Natural killer cell (primary cell): ENCODE measurements at regions of chr18 and their contacts with region 1.

Region 1: DNA sequence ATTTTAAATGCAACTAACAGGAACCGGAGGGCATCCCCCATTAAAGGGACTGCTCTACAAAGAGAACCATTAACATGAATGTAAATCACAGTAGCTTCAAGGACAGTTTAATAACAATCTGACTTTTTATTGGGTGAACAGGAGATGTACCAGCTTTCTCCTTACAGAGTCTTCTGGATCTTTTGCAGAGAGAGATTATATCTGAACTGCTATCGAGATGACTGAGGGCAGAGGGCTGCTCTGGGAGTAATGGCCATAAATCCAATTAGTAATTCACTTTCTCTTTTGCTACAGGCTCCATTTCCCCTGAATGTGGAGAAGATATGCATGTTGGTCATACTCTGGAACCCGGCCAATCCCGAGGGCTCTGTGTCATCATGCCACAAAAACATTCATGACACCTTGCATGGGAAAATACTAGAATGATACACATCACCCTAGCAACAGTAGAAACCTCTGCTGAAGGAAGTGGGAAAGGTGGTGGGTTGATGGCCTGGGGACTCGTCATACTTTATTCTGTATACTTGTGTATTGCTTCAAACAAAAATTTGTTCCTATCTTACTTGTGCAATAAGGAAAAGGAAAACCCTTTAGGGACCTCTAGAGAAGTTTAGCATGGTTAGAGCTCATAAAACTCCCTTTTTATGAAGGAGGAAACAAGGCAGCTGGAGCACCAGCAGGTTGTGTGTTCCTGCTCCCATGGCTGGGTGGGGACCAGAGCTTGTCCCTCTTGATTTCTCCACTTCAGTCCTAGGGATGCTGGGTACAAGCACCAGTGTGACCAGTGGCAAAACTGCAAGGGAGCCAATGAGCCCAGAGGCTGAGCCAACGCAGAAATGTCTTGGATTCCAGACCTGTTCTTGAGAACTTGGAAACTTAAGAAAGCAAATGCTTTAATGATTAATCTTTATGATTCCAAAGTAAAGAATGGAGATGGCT is 26.0 kb downstream of the CTAGE1 start:
- DNase-seq: peak; percentile 77 to 84
- ATAC-seq: peak; percentile 66 to 83 (median 76)
- H3K4me3 ChIP-seq: no peak overlapping the region
- H3K4me3 Mint-ChIP-seq: peak overlapping the region; percentile 77
- H3K27ac ChIP-seq: peak overlapping the region; percentile 76
- H3K27ac Mint-ChIP-seq: peak overlapping the region; percentile 94 to 95
- H3K4me1 ChIP-seq: peaks cover 29% of the 10 kb centered on the region
- H3K4me1 Mint-ChIP-seq: peaks cover 78% of the 10 kb centered on the region in 2 donors
- H3K27me3 ChIP-seq: no peaks in the 10 kb centered on the region
- H3K27me3 Mint-ChIP-seq: no peaks in the 10 kb centered on the region
- CTCF ChIP-seq: no peak

Region 2: DNA sequence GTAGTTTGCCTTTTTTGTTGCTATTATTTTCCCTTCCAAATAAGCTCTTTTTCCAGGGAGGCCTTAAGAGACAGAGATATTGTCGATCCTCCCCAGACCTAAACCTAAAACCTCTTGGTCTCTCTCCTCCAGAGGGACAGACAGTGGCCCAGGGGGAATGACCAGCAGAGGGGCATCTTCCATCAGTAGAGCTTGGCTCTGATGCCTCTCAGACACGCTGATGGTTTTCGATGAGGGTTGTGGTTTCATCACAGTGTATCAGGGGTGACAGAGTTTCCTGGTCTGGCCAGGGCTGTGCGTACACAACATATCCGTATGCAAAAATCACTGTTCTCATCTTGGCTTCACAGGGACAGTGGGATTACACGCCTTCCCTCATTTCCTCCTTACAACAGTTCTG is 153.6 kb before region 1 on chr18:
- intact Hi-C with region 1: no loop called
- DNase-seq: peak; percentile 57 to 74
- ATAC-seq: peak; percentile 94 to 100 (median 97)
- H3K4me3 ChIP-seq: no peak overlapping the region
- H3K4me3 Mint-ChIP-seq: peak overlapping the region; percentile 11
- H3K27ac ChIP-seq: no peak overlapping the region
- H3K27ac Mint-ChIP-seq: peak overlapping the region; percentile 61 to 75
- H3K4me1 ChIP-seq: peaks cover 15% of the 10 kb centered on the region
- H3K4me1 Mint-ChIP-seq: peaks cover 16 to 20% of the 10 kb centered on the region in 2 donors
- H3K27me3 ChIP-seq: no peaks in the 10 kb centered on the region
- H3K27me3 Mint-ChIP-seq: peaks cover 18 to 30% of the 10 kb centered on the region in 2 donors
- CTCF ChIP-seq: peak; percentile 63

Region 3: GRCh38 chr18:22257022-22257543 is 134.6 kb before region 1 on chr18:
- intact Hi-C with region 1: loop called (anchors 1 kb)
- DNase-seq: no peak
- ATAC-seq: no peak
- H3K4me3 ChIP-seq: no peak overlapping the region
- H3K4me3 Mint-ChIP-seq: no peak overlapping the region
- H3K27ac ChIP-seq: no peak overlapping the region
- H3K27ac Mint-ChIP-seq: peak overlapping the region in 1 of 2 donors; percentile 48
- H3K4me1 ChIP-seq: peaks cover 33% of the 10 kb centered on the region
- H3K4me1 Mint-ChIP-seq: peaks cover 45 to 57% of the 10 kb centered on the region in 2 donors
- H3K27me3 ChIP-seq: no peaks in the 10 kb centered on the region
- H3K27me3 Mint-ChIP-seq: peaks cover 28 to 34% of the 10 kb centered on the region in 2 donors
- CTCF ChIP-seq: no peak

Region 4: GRCh38 chr18:22282311-22283112 is 109.2 kb before region 1 on chr18:
- intact Hi-C with region 1: loop called (anchors 1 kb)
- DNase-seq: peak; percentile 72 to 80
- ATAC-seq: peak; percentile 83 to 92 (median 92)
- H3K4me3 ChIP-seq: no peak overlapping the region
- H3K4me3 Mint-ChIP-seq: peak overlapping the region; percentile 62
- H3K27ac ChIP-seq: peak overlapping the region; percentile 89
- H3K27ac Mint-ChIP-seq: peak overlapping the region; percentile 94 to 96
- H3K4me1 ChIP-seq: peaks cover 11% of the 10 kb centered on the region
- H3K4me1 Mint-ChIP-seq: peaks cover 27 to 40% of the 10 kb centered on the region in 2 donors
- H3K27me3 ChIP-seq: no peaks in the 10 kb centered on the region
- H3K27me3 Mint-ChIP-seq: peaks cover 3 to 7% of the 10 kb centered on the region in 2 donors
- CTCF ChIP-seq: no peak

Region 5: GRCh38 chr18:22332590-22332989 is 59.1 kb before region 1 on chr18:
- intact Hi-C with region 1: no loop called
- DNase-seq: peak in 1 of 2 donors; percentile 26
- ATAC-seq: peak; percentile 48 to 78 (median 69)
- H3K4me3 ChIP-seq: no peak overlapping the region
- H3K4me3 Mint-ChIP-seq: no peak overlapping the region
- H3K27ac ChIP-seq: no peak overlapping the region
- H3K27ac Mint-ChIP-seq: no peak overlapping the region
- H3K4me1 ChIP-seq: peaks cover 13% of the 10 kb centered on the region
- H3K4me1 Mint-ChIP-seq: peaks cover 25 to 37% of the 10 kb centered on the region in 2 donors
- H3K27me3 ChIP-seq: no peaks in the 10 kb centered on the region
- H3K27me3 Mint-ChIP-seq: no peaks in the 10 kb centered on the region
- CTCF ChIP-seq: no peak

Region 6: DNA sequence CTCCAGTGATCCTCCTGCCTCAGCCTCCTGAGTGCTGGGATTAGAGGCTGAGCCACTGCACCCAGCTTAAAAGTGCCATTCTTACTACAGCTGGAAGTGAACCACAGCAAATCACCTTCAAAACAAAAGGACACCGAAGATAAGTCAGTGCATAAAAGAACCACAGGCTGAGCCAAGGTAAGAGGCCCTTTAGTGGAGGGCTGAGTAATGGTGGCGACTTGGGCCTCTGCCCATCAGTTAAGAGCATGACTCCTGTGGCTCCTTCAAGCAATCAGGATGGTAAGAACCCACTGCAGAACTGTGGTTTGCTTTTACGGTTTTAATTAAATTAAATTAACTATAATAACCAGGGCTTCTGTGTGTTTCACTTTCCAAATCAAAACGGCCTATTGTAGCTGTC is 49.1 kb before region 1 on chr18:
- intact Hi-C with region 1: loop called (anchors 1 kb)
- DNase-seq: peak; percentile 38 to 74
- ATAC-seq: peak; percentile 15 to 28 (median 23)
- H3K4me3 ChIP-seq: no peak overlapping the region
- H3K4me3 Mint-ChIP-seq: peak overlapping the region; percentile 61
- H3K27ac ChIP-seq: peak overlapping the region; percentile 94
- H3K27ac Mint-ChIP-seq: peak overlapping the region; percentile 92 to 97
- H3K4me1 ChIP-seq: peaks cover 87% of the 10 kb centered on the region
- H3K4me1 Mint-ChIP-seq: peaks cover 77 to 89% of the 10 kb centered on the region in 2 donors
- H3K27me3 ChIP-seq: no peaks in the 10 kb centered on the region
- H3K27me3 Mint-ChIP-seq: no peaks in the 10 kb centered on the region
- CTCF ChIP-seq: no peak

Region 7: DNA sequence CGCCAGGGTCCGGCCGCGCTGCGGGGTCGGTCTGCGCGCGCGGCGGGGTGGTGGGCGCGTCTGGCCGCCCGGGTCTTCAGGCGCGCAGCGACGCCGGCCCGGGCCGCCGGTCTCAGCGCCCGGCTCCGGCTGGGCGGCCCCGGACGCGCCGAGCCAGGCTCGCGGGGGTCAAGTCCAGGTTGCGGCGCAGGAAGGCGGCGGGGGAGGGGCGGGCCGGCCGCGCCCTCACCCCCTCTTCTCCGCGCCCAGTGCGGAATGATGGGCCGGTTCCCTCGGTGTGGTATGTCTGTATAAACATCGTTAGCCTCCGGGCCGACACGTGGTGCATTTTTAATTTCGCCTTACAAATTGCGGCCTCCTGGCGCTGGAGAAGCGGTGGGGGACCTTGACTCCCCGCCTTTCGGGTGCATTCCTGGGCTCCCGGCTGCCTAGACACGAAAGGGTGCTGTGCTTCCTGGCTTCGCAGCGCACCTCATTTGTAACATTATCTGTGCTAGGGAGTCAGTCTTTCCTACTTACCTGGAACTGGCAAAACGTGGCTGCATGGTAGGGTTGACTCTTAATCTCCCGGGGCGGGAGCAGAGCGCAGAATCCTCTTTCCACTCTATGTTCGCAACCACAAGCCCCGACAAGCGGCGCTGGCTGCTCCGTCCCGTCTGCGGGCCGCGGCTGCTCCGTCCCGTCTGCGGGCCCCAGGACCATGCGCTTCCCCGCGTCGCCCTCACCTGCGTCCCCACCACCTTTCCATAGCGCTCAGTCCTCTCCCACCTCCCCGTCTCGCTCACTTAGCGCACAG is 43.0 kb before region 1 on chr18:
- intact Hi-C with region 1: loop called (anchors 1 kb)
- DNase-seq: peak; percentile 34 to 43
- ATAC-seq: peak in 1 of 3 donors; percentile 3
- H3K4me3 ChIP-seq: peak overlapping the region; percentile 79
- H3K4me3 Mint-ChIP-seq: peak overlapping the region; percentile 92
- H3K27ac ChIP-seq: peak overlapping the region; percentile 94
- H3K27ac Mint-ChIP-seq: peak overlapping the region; percentile 92 to 97
- H3K4me1 ChIP-seq: peaks cover 44% of the 10 kb centered on the region
- H3K4me1 Mint-ChIP-seq: peaks cover 65% of the 10 kb centered on the region in 2 donors
- H3K27me3 ChIP-seq: no peaks in the 10 kb centered on the region
- H3K27me3 Mint-ChIP-seq: no peaks in the 10 kb centered on the region
- CTCF ChIP-seq: no peak

Region 8: DNA sequence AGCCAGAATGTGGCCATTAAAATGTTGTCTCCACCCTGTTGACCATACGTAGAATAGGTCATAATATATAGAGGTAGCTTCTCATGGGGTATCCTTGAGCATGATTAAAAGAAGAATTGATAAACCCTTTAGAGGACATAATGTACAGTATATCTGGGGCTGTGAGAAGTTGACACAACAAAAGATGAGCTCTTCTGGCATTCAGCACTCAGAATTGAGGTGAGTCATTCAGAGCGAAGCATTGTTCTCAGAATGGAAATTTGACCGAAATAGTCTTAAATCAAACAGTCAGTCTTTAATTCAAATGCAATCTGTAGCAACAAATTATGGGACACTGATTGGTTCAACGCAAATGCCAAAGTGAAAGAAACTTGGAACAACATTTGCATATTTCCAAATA is 21.3 kb before region 1 on chr18:
- intact Hi-C with region 1: no loop called
- DNase-seq: no peak
- ATAC-seq: no peak
- H3K4me3 ChIP-seq: no peak overlapping the region
- H3K4me3 Mint-ChIP-seq: no peak overlapping the region
- H3K27ac ChIP-seq: no peak overlapping the region
- H3K27ac Mint-ChIP-seq: no peak overlapping the region
- H3K4me1 ChIP-seq: no peaks in the 10 kb centered on the region
- H3K4me1 Mint-ChIP-seq: peaks cover 4 to 6% of the 10 kb centered on the region in 2 donors
- H3K27me3 ChIP-seq: no peaks in the 10 kb centered on the region
- H3K27me3 Mint-ChIP-seq: peaks cover 16 to 22% of the 10 kb centered on the region in 2 donors
- CTCF ChIP-seq: no peak

Region 9: DNA sequence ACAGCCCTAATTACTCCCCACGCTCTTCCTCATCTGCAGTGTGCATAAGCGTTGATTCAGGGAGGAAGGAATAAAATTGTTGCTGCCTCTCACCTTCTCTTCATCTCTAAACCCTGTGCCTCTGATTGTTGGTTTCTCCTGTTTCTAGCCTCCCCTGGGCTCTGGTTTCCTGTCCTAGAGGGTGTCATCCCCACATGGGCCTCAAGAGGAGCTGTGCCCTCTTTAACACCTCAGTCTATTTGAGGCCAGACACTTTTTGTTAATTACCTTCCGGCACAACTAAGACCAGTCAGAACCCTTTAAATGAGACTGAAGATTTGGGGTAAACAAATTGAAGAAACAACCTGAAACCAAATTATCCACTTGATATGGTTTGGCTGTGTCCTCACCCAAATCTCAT is 16.4 kb after region 1 on chr18:
- intact Hi-C with region 1: loop called (anchors 2 kb)
- DNase-seq: peak; percentile 33 to 48
- ATAC-seq: peak; percentile 89 to 96 (median 93)
- H3K4me3 ChIP-seq: no peak overlapping the region
- H3K4me3 Mint-ChIP-seq: peak overlapping the region; percentile 84
- H3K27ac ChIP-seq: peak overlapping the region; percentile 72
- H3K27ac Mint-ChIP-seq: peak overlapping the region; percentile 88 to 92
- H3K4me1 ChIP-seq: peaks cover 32% of the 10 kb centered on the region
- H3K4me1 Mint-ChIP-seq: peaks cover 49 to 52% of the 10 kb centered on the region in 2 donors
- H3K27me3 ChIP-seq: no peaks in the 10 kb centered on the region
- H3K27me3 Mint-ChIP-seq: peaks cover 0 to 2% of the 10 kb centered on the region in 2 donors
- CTCF ChIP-seq: peak; percentile 57

Region 10: DNA sequence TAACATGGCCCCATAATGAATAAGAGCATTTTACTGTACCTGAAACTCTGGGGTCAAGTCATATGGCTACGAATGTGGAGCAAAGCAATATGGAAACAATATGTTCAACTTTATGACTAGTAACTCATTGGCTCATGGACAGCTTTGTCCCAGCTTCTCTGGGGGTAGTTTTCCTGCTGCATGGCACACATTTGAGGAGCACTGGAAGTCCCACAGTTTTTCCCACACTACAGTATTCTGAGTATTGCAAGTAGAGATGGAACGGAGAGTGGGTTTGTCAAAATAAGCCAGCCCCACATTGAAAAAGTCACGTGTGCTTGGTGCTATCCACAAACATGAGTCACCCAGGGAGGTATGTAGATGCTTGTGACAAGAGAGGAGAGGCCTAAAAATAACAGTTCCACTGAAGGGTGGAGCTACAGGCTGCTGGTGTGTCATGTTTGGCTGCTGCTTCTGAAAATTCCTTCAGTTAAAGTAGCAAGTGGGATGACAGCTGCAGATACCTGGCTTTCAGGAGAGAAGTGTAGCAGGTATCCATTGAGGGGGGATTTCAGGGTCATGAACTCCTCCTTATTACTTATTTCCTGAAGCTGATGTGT is 74.3 kb after region 1 on chr18:
- intact Hi-C with region 1: loop called (anchors 2 kb)
- DNase-seq: peak; percentile 50 to 71
- ATAC-seq: peak; percentile 96 to 100 (median 97)
- H3K4me3 ChIP-seq: no peak overlapping the region
- H3K4me3 Mint-ChIP-seq: peak overlapping the region; percentile 86
- H3K27ac ChIP-seq: no peak overlapping the region
- H3K27ac Mint-ChIP-seq: peak overlapping the region; percentile 83 to 86
- H3K4me1 ChIP-seq: peaks cover 24% of the 10 kb centered on the region
- H3K4me1 Mint-ChIP-seq: peaks cover 43 to 49% of the 10 kb centered on the region in 2 donors
- H3K27me3 ChIP-seq: no peaks in the 10 kb centered on the region
- H3K27me3 Mint-ChIP-seq: peaks cover 11 to 15% of the 10 kb centered on the region in 2 donors
- CTCF ChIP-seq: no peak